GM23248 (cell line): ENCODE measurements at regions of chr17 and their contacts with region 1.

Region 1: DNA sequence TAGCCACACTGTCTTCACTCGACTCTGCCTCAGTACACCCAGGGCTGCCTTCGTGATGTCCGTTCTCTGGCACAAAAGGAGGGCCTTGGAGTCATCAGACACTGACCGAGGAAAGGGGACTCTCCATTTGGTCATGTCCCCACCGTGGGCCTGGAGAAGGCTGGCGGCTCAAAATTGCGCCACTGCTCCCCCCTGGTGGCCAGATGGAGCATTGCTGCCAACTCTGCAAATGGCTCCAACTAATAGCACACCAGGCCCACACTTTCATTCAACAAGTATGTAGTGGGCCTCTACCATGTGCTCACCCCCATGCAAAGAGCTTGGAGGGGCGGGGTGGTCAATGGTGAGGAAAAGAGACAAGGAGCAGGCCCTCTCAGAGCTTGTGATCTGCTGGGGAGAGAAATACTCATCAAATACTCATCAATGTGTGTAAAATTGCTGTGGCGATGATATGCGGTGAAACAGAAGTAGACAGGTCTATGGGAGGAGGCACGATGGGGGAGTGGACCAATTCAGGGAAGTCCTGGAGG is 5.2 kb upstream of the GRIN2C start:
- DNase-seq: peak; percentile 74
- H3K4me3 ChIP-seq: no peak overlapping the region
- H3K27ac ChIP-seq: no peak overlapping the region
- H3K4me1 ChIP-seq: no peaks in the 10 kb centered on the region
- H3K27me3 ChIP-seq: peaks cover 18% of the 10 kb centered on the region

Region 2: DNA sequence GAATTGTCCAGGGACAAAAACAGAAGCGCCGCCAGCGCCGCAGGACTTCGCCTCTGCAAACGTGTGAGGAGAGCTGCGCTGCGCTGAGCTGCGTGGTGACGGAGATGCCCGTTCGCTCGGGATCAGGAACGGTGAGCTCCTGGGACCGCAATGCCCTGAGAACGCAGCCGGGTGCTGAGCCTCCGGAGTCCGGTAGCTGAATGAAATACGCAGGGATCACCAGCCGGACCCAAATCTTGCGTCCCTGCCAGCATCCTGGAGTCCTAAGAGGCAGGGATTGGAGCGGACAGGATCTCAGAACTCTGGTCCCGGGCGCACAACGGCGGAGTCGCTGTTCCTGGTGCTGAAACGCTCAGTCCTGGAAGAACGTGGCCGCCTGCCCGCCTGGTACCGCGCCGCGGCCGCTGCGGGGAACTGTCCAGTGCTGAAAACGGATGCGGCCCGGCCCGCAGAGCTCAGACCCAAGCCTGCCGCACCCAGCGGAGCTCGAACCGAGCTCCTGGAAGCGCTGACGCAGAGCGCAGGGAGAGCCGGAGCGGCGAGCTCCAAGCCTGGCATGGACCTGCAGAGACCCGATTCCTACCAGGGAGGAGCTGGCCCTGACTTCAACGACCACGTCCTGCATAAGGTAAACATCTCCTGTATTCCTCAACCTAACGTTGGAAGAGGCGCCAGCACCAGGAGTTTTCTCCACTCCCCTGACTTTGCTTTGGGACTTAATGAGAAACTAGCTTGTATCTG is 193.7 kb before region 1 on chr17:
- in situ Hi-C with region 1: no loop called
- DNase-seq: peak; percentile 81
- H3K4me3 ChIP-seq: no peak overlapping the region
- H3K27ac ChIP-seq: no peak overlapping the region
- H3K4me1 ChIP-seq: no peaks in the 10 kb centered on the region
- H3K27me3 ChIP-seq: peaks cover 7% of the 10 kb centered on the region; the same call in 1 of the 2 replicates

Region 3: DNA sequence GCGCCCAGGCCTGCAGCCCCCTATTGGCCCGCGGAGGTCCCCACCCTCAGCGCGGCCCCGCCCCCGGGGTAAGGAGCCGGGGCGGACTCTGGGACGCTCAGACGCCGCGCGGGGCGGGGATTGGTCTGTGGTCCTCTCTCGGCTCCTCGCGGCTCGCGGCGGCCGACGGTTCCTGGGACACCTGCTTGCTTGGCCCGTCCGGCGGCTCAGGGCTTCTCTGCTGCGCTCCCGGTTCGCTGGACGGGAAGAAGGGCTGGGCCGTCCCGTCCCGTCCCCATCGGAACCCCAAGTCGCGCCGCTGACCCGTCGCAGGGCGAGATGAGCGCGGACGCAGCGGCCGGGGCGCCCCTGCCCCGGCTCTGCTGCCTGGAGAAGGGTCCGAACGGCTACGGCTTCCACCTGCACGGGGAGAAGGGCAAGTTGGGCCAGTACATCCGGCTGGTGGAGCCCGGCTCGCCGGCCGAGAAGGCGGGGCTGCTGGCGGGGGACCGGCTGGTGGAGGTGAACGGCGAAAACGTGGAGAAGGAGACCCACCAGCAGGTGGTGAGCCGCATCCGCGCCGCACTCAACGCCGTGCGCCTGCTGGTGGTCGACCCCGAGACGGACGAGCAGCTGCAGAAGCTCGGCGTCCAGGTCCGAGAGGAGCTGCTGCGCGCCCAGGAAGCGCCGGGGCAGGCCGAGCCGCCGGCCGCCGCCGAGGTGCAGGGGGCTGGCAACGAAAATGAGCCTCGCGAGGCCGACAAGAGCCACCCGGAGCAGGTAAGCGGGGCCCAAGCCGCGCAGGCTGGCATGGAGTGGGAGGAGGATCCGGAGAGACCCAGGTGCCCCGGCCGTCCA is 116.2 kb before region 1 on chr17 and contains the start of gene NHERF1:
- in situ Hi-C with region 1: loop called (anchors 10 kb)
- DNase-seq: peak; percentile 97
- H3K4me3 ChIP-seq: peak within 1 kb of the TSS; percentile 76
- H3K27ac ChIP-seq: no peak within 1 kb of the TSS
- H3K4me1 ChIP-seq: no peaks in the 10 kb centered on the region
- H3K27me3 ChIP-seq: no peaks in the 10 kb centered on the region
- total RNA-seq, gene NHERF1: 6.6 and 8.0 TPM in 2 replicates

Region 4: DNA sequence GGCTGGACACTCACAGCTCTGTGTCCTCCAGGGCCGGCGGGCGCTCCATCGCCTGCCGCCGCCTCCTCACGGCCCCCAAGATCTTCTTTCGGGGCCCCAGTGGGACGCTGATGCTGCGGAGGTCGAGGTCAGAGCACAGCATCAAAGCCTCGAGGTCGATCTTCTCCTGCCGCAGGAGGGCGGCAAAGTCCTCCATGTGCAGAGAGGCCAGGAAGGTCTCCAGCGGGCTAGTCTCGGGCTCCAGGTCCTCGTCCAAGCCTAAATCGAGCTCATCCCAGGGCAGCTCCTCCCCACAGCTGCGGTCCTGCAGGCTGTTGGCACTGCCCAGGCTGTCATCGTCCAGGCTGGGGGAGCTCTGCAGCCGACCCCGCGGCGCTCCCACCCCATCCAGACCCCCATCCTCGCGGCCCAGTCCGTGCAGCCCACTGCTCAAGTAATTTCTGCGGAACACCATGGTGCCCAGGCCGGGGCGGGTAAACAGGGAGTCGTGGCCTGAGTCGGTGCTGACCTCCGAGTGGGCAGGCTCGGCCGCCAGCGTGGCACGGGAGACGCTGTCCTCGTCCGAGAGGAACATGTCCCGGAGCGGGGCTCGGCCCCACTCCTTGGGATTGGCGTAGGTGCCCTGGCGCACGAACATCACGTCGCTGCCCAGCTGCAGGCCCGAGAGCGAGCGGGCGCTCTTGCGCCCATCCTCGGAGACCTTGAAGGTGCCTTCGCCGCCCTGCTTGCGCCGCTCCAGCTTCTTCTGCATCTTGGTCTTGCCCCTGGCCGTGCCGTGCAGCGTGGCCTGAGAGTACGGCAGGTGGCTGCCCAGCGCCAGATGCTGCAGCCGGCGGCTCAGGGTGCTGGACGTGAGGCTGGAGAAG is 54.7 kb after region 1 on chr17:
- in situ Hi-C with region 1: no loop called
- DNase-seq: peak; percentile 65
- H3K4me3 ChIP-seq: peak overlapping the region; percentile 27; the same call in 1 of the 2 replicates
- H3K27ac ChIP-seq: no peak overlapping the region
- H3K4me1 ChIP-seq: no peaks in the 10 kb centered on the region
- H3K27me3 ChIP-seq: peaks cover 50% of the 10 kb centered on the region